Heart right ventricle (tissue), 16 donors: ENCODE measurements at regions of chr3 and their contacts with region 1.

Region 1: DNA sequence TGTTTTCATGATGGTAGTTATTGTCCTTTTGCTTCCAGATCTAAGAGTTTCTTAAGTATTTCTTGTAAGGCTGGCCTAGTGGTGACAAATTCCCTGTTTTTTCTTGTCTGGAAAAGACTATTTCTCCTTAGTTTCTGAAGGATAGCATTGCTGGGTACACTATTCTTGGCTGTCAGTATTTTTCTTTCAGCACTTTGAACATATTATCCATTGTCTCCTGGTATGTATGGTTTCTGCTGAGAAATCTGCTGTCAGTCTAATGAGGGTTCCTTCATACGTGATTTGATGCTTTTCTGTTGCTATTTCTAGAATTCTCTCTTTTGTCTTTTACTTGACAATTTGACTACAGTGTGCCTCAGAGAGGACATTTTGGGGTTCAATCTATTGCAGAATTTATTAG is 134.3 kb downstream of the CGGBP1 start:
- DNase-seq: no peak
- ATAC-seq: no peak
- H3K4me3 ChIP-seq: no peak overlapping the region
- H3K27ac ChIP-seq: no peak overlapping the region
- H3K4me1 ChIP-seq: no peaks in the 10 kb centered on the region
- H3K27me3 ChIP-seq: no peaks in the 10 kb centered on the region
- CTCF ChIP-seq: no peak

Region 2: GRCh38 chr3:87805670-87806069 is 118.8 kb before region 1 on chr3:
- intact Hi-C with region 1: no loop called
- DNase-seq: no peak
- ATAC-seq: no peak
- H3K4me3 ChIP-seq: no peak overlapping the region
- H3K27ac ChIP-seq: no peak overlapping the region
- H3K4me1 ChIP-seq: peaks cover 0 to 3% (median 0%) of the 10 kb centered on the region in 9 donors
- H3K27me3 ChIP-seq: no peaks in the 10 kb centered on the region
- CTCF ChIP-seq: no peak

Region 3: GRCh38 chr3:87975716-87976115 is 51.2 kb after region 1 on chr3:
- intact Hi-C with region 1: loop called in 1 of 10 experiments (anchors 10 kb)
- DNase-seq: no peak
- ATAC-seq: no peak
- H3K4me3 ChIP-seq: no peak overlapping the region
- H3K27ac ChIP-seq: no peak overlapping the region
- H3K4me1 ChIP-seq: no peaks in the 10 kb centered on the region
- H3K27me3 ChIP-seq: peaks cover 0 to 14% (median 0%) of the 10 kb centered on the region in 7 donors
- CTCF ChIP-seq: no peak

Region 4: GRCh38 chr3:88105325-88105724 is 180.8 kb after region 1 on chr3:
- intact Hi-C with region 1: no loop called
- DNase-seq: no peak
- ATAC-seq: peak in 1 of 8 donors; percentile 42
- H3K4me3 ChIP-seq: no peak overlapping the region
- H3K27ac ChIP-seq: no peak overlapping the region
- H3K4me1 ChIP-seq: peaks cover 0 to 28% (median 21%) of the 10 kb centered on the region in 9 donors
- H3K27me3 ChIP-seq: no peaks in the 10 kb centered on the region
- CTCF ChIP-seq: no peak